ENCODE measurements at regions of chr1 and their contacts with region 1.

Region 1: GRCh38 chr1:236103646-236104218 is 38.6 kb upstream of the GPR137B start:
- DNase-seq: peak; percentile 29
- H3K4me3 ChIP-seq: no peak overlapping the region
- H3K27ac ChIP-seq: no peak overlapping the region
- H3K4me1 ChIP-seq: no peaks in the 10 kb centered on the region
- H3K27me3 ChIP-seq: no peaks in the 10 kb centered on the region
- CTCF ChIP-seq: peak; percentile 71 to 79

Region 2: DNA sequence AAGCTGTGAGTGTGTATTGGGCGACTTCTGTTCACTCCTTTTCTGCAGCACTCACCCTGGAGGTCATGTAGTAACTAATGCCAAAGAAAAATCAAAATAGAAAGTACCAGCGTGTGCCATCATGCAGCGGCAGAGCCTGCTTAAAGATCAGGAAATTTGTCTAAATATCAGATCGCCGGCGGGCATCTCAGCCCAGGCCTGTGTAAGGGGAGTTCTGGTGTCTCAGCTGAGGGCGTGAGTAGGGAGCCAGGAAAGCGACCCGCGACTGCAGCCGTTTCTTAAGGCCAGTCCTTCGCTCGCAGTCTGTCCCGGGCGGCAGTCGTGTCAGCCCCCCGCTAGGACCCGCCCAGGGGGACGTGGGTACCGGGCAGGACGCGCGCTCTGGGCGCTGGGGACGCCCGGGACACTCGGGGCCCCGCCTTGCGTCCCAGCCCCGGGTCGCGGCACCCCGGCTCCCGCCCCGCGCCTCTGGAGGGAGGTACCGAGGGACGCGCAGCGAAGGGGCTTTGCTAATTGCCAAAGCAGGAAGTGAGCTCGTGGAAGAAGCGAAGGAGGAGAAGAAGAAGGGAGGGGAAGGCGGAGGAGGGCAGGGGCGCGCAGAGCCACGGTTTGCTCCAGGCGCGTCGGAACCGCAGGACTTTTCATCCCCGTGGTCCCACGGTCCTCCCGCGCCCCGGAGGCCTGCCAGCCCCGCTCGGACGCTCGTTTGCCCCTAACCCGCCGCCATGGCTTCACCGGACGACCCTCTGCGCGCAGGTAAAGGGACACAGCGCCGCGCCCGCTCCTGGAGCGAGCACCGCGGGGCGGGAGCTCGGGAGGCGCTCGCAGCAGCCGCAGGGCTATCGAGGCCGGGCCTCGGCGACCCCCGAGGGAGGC is 291.4 kb after region 1 on chr1:
- CTCF ChIA-PET with region 1: no interaction called
- dilution Hi-C with region 1: no loop called
- in situ Hi-C with region 1: no loop called
- intact Hi-C with region 1: loop called (anchors 5 kb)
- DNase-seq: peak; percentile 72
- H3K4me3 ChIP-seq: peak overlapping the region; percentile 90 to 95 (median 94)
- H3K27ac ChIP-seq: peak overlapping the region; percentile 28
- H3K4me1 ChIP-seq: peaks cover 12% of the 10 kb centered on the region
- H3K27me3 ChIP-seq: no peaks in the 10 kb centered on the region
- CTCF ChIP-seq: no peak

Region 3: DNA sequence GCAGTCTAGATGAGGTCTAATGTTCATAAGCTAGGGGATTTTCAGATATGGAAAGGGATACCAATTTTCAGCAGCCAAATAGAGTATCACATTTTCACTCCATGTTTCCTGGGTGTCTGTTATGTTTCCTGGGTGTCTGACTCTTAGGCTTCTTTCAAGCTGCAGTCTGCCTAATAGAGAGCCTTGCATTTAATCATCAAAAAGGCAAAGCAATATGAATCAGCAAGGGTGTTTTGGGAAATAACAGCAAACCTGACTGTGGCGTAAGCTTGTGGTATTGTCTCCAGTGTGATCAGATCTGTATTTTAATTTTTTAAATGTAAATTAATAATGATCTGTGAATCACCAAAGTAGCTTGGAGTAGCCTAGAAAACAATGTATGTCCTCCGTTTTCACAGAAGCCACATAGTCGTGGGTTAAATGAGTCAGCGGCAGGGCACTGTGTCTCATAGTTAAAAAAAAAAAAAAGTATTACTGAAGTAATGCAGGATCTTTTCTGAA is 430.5 kb after region 1 on chr1:
- CTCF ChIA-PET with region 1: no interaction called
- dilution Hi-C with region 1: no loop called
- in situ Hi-C with region 1: loop called (anchors 10 kb)
- intact Hi-C with region 1: loop called (anchors 1 kb)
- DNase-seq: peak; percentile 72
- H3K4me3 ChIP-seq: no peak overlapping the region
- H3K27ac ChIP-seq: no peak overlapping the region
- H3K4me1 ChIP-seq: peaks cover 11% of the 10 kb centered on the region
- H3K27me3 ChIP-seq: no peaks in the 10 kb centered on the region
- CTCF ChIP-seq: no peak

Region 4: DNA sequence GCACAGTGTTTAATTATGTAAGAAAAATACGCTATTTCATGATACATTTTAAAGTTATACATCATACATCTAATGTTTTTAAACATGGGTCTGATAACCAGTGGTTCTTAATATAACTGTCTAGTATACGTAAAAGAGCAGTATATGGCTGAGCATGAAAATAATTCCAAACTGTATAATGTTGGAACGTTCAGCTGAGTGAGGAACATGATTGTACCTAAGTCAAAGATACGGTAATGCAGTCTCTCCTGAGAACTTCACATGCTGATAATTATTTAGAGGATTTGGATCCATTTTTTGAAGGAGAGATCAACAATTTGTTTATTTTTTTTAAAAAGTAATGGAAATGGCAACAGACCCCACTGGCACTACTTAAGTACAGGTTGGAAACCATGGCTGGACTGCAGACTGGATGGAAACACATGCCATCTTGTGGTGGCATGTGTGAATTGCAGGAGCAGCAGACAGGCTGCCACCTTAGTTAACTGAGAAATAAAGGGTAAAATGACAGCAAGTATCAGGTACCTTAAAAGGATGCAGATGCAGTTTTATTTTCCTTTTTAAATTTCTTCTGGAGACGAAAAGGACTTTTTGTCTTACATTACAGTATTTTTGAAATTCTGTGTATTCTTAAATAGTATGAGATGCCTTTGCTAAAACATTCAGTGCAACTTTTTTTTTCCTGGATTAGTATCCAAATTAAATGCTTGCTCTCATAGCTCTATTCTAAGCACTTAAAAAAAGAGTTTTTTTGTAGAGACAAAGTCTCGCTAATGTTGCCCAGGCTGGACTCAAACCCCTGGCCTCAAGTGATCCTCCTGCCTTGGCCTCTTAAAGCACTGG is 765.1 kb after region 1 on chr1:
- CTCF ChIA-PET with region 1: no interaction called
- dilution Hi-C with region 1: no loop called
- in situ Hi-C with region 1: no loop called
- intact Hi-C with region 1: loop called (anchors 2 kb)
- DNase-seq: peak; percentile 41
- H3K4me3 ChIP-seq: no peak overlapping the region
- H3K27ac ChIP-seq: no peak overlapping the region
- H3K4me1 ChIP-seq: no peaks in the 10 kb centered on the region
- H3K27me3 ChIP-seq: no peaks in the 10 kb centered on the region
- CTCF ChIP-seq: peak; percentile 96 to 98

Region 5: GRCh38 chr1:237562242-237562823 is 1458.6 kb after region 1 on chr1:
- CTCF ChIA-PET with region 1: no interaction called
- dilution Hi-C with region 1: no loop called
- in situ Hi-C with region 1: loop called in 1 of 2 experiments (anchors 25 kb)
- intact Hi-C with region 1: loop called (anchors 5 kb)
- DNase-seq: peak; percentile 66
- H3K4me3 ChIP-seq: no peak overlapping the region
- H3K27ac ChIP-seq: no peak overlapping the region
- H3K4me1 ChIP-seq: no peaks in the 10 kb centered on the region
- H3K27me3 ChIP-seq: no peaks in the 10 kb centered on the region
- CTCF ChIP-seq: peak; percentile 58 to 78